ENCODE measurements at regions of chr3 and their contacts with region 1.

Region 1: DNA sequence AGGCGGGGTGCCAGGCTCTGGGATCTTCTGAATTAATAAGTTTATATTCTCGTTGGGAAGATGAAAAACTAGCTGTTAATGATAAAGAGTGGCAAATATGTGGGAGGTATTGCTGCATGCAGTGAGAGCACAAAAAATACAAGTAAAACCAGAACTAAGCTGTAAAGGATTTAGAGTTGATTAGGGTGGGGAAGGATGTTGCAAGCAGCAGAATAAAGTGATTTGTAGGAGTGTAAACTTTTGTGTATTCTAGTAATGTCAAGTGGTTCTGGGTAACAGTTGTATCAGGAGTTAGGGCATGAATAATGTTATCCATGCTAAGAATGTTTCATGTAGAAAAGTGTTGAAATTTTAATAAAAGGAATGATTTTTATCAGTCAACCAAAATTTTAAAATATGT is 18.1 kb downstream of the CRYBG3 start:
- DNase-seq: no peak
- ATAC-seq: no peak
- H3K4me3 ChIP-seq: no peak overlapping the region
- H3K4me3 Mint-ChIP-seq: no peak overlapping the region
- H3K27ac ChIP-seq: no peak overlapping the region
- H3K27ac Mint-ChIP-seq: no peak overlapping the region
- H3K4me1 ChIP-seq: no peaks in the 10 kb centered on the region
- H3K4me1 Mint-ChIP-seq: no peaks in the 10 kb centered on the region
- H3K27me3 ChIP-seq: no peaks in the 10 kb centered on the region
- H3K27me3 Mint-ChIP-seq: no peaks in the 10 kb centered on the region

Region 2: DNA sequence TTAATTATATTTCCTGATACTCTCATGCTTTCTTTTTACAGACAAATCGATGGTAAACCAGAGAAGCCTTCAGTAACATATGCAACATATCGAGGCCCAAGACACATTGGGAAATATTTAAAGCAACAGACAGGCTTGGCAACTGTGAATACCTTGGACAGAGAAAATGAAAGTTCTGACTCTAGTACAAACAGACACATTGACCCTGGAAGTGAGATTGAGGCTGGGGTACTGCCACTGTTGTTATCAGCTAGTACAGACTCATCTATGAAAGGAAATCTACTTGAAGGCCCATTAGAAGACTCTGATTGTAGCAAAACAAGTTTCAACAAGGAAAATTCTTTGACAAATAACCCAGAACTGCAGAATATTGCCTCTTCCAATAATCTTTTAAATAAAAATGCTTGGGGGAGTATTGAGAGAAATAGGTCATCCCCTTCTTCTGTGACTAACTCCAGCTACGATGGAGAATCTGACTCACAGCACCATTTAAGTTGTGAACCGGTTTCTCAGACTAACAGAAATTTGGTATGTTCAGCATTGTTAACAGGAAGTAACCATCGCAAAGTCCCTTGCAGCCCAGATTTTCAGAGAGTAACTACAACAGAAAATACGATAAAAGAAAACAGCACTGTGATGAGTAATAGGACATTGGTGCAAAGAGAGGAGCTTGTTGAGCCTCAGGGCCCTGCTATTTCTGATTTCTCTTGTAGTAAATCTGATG is 32.0 kb after region 1 on chr3:
- CTCF ChIA-PET with region 1: no interaction called
- POLR2A ChIA-PET with region 1: no interaction called
- intact Hi-C with region 1: loop called in 1 of 2 experiments (anchors 5 kb)
- DNase-seq: peak in 3 of 9 donors; percentile 1 to 21 (median 13)
- ATAC-seq: peak; percentile 31
- H3K4me3 ChIP-seq: peak overlapping the region; percentile 14
- H3K4me3 Mint-ChIP-seq: peak overlapping the region in 7 of 10 donors; percentile 26 to 73 (median 58)
- H3K27ac ChIP-seq: no peak overlapping the region
- H3K27ac Mint-ChIP-seq: peak overlapping the region in 5 of 9 donors; percentile 55 to 90 (median 74)
- H3K4me1 ChIP-seq: peaks cover 0 to 6% of the 10 kb centered on the region in 2 donors
- H3K4me1 Mint-ChIP-seq: peaks cover 0 to 22% (median 15%) of the 10 kb centered on the region in 7 donors
- H3K27me3 ChIP-seq: no peaks in the 10 kb centered on the region
- H3K27me3 Mint-ChIP-seq: no peaks in the 10 kb centered on the region

Region 3: DNA sequence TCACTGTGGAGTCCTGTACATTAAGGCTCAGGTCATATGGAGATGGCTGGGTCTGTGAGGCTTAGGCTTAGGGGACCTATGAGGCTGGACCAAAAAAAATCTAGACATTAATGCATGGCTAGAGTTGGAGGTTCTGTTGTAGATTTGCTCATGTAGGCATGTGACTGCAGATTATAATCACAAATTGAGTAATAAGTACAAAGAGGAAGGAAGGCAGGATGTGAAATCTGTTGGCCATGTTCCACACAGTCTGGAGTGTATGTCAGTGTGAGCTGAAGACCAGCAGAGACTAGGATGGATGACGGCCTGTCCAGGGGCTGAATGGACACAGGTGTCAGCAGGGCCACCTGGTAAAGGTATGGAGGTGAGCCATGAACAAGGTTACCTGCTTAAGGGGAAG is 923.1 kb after region 1 on chr3 and contains the start of gene ST3GAL6:
- CTCF ChIA-PET with region 1: no interaction called
- POLR2A ChIA-PET with region 1: no interaction called
- intact Hi-C with region 1: no loop called
- DNase-seq: no peak
- ATAC-seq: peak; percentile 82
- H3K4me3 ChIP-seq: no peak within 1 kb of the TSS
- H3K4me3 Mint-ChIP-seq: peak within 1 kb of the TSS in 1 of 10 donors; percentile 50
- H3K27ac ChIP-seq: no peak within 1 kb of the TSS
- H3K27ac Mint-ChIP-seq: peak within 1 kb of the TSS in 1 of 9 donors; percentile 14
- H3K4me1 ChIP-seq: no peaks in the 10 kb centered on the region
- H3K4me1 Mint-ChIP-seq: peaks cover 0 to 14% (median 0%) of the 10 kb centered on the region in 7 donors
- H3K27me3 ChIP-seq: no peaks in the 10 kb centered on the region
- H3K27me3 Mint-ChIP-seq: peaks cover 12 to 43% (median 19%) of the 10 kb centered on the region in 5 donors
- total RNA-seq, gene ST3GAL6: 0.62 to 13.5 (median 1.2) TPM in 4 of 5 experiments, not detected in the other

Measured in naive thymus-derived CD4-positive, alpha-beta T cell (primary cell).